A673 (cell line): ENCODE measurements at regions of chr9 and their contacts with region 1.

Region 1: GRCh38 chr9:79912318-79913070 is 340.7 kb downstream of the TLE4 start:
- DNase-seq: no peak
- H3K4me3 ChIP-seq: no peak overlapping the region
- H3K27ac ChIP-seq: no peak overlapping the region
- H3K4me1 ChIP-seq: no peaks in the 10 kb centered on the region
- H3K27me3 ChIP-seq: no peaks in the 10 kb centered on the region
- CTCF ChIP-seq: no peak

Region 2: GRCh38 chr9:79847074-79847473 is 65.4 kb before region 1 on chr9:
- CTCF ChIA-PET with region 1: no interaction called
- POLR2A ChIA-PET with region 1: no interaction called
- intact Hi-C with region 1: no loop called
- DNase-seq: no peak
- H3K4me3 ChIP-seq: no peak overlapping the region
- H3K27ac ChIP-seq: no peak overlapping the region
- H3K4me1 ChIP-seq: no peaks in the 10 kb centered on the region
- H3K27me3 ChIP-seq: no peaks in the 10 kb centered on the region
- CTCF ChIP-seq: no peak

Region 3: GRCh38 chr9:79955300-79955699 is 42.8 kb after region 1 on chr9:
- CTCF ChIA-PET with region 1: no interaction called
- POLR2A ChIA-PET with region 1: no interaction called
- intact Hi-C with region 1: loop called (anchors 5 kb)
- DNase-seq: peak; percentile 22
- H3K4me3 ChIP-seq: no peak overlapping the region
- H3K27ac ChIP-seq: no peak overlapping the region
- H3K4me1 ChIP-seq: no peaks in the 10 kb centered on the region
- H3K27me3 ChIP-seq: peaks cover 14% of the 10 kb centered on the region
- CTCF ChIP-seq: peak; percentile 49